ENCODE measurements at regions of chrX and their contacts with region 1.

Region 1: GRCh38 chrX:154799554-154800348 is 5.5 kb downstream of the MPP1 start:
- DNase-seq: peak; percentile 71 to 82
- H3K4me3 ChIP-seq: no peak overlapping the region
- H3K4me3 Mint-ChIP-seq: peak overlapping the region; percentile 56
- H3K27ac Mint-ChIP-seq: peak overlapping the region; percentile 86
- H3K4me1 ChIP-seq: peaks cover 39% of the 10 kb centered on the region
- H3K4me1 Mint-ChIP-seq: peaks cover 21% of the 10 kb centered on the region
- H3K27me3 ChIP-seq: no peaks in the 10 kb centered on the region
- H3K27me3 Mint-ChIP-seq: no peaks in the 10 kb centered on the region
- CTCF ChIP-seq: no peak

Region 2: GRCh38 chrX:154661170-154661569 is 138.6 kb before region 1 on chrX:
- CTCF ChIA-PET with region 1: no interaction called
- POLR2A ChIA-PET with region 1: no interaction called
- intact Hi-C with region 1: no loop called
- DNase-seq: no peak
- H3K4me3 ChIP-seq: no peak overlapping the region
- H3K4me3 Mint-ChIP-seq: no peak overlapping the region
- H3K27ac Mint-ChIP-seq: no peak overlapping the region
- H3K4me1 ChIP-seq: no peaks in the 10 kb centered on the region
- H3K4me1 Mint-ChIP-seq: no peaks in the 10 kb centered on the region
- H3K27me3 ChIP-seq: no peaks in the 10 kb centered on the region
- H3K27me3 Mint-ChIP-seq: peaks cover 10% of the 10 kb centered on the region
- CTCF ChIP-seq: no peak

Region 3: GRCh38 chrX:154762523-154763289 is 37.0 kb before region 1 on chrX and contains the start of gene DKC1:
- CTCF ChIA-PET with region 1: no interaction called
- POLR2A ChIA-PET with region 1: interaction called, 4 read pairs
- intact Hi-C with region 1: loop called (anchors 1 kb)
- DNase-seq: peak; percentile 95 to 96
- H3K4me3 ChIP-seq: peak within 1 kb of the TSS; percentile 78
- H3K4me3 Mint-ChIP-seq: peak within 1 kb of the TSS; percentile 84
- H3K27ac Mint-ChIP-seq: peak within 1 kb of the TSS; percentile 84
- H3K4me1 ChIP-seq: no peaks in the 10 kb centered on the region
- H3K4me1 Mint-ChIP-seq: no peaks in the 10 kb centered on the region
- H3K27me3 ChIP-seq: no peaks in the 10 kb centered on the region
- H3K27me3 Mint-ChIP-seq: no peaks in the 10 kb centered on the region
- CTCF ChIP-seq: no peak
- total RNA-seq, gene DKC1: 106 and 107 TPM in 2 replicates

Region 4: GRCh38 chrX:154784149-154784995 is 15.4 kb before region 1 on chrX:
- CTCF ChIA-PET with region 1: no interaction called
- POLR2A ChIA-PET with region 1: no interaction called
- intact Hi-C with region 1: loop called (anchors 2 kb)
- DNase-seq: no peak
- H3K4me3 ChIP-seq: no peak overlapping the region
- H3K4me3 Mint-ChIP-seq: peak overlapping the region; percentile 33
- H3K27ac Mint-ChIP-seq: peak overlapping the region; percentile 65
- H3K4me1 ChIP-seq: peaks cover 7% of the 10 kb centered on the region; the same call in 1 of the 2 replicates
- H3K4me1 Mint-ChIP-seq: peaks cover 18% of the 10 kb centered on the region
- H3K27me3 ChIP-seq: no peaks in the 10 kb centered on the region
- H3K27me3 Mint-ChIP-seq: no peaks in the 10 kb centered on the region
- CTCF ChIP-seq: no peak

Region 5: GRCh38 chrX:154840856-154841255 is 41.1 kb after region 1 on chrX:
- CTCF ChIA-PET with region 1: no interaction called
- POLR2A ChIA-PET with region 1: no interaction called
- intact Hi-C with region 1: loop called (anchors 5 kb)
- DNase-seq: peak in 1 of 2 experiments; percentile 19
- H3K4me3 ChIP-seq: no peak overlapping the region
- H3K4me3 Mint-ChIP-seq: no peak overlapping the region
- H3K27ac Mint-ChIP-seq: no peak overlapping the region
- H3K4me1 ChIP-seq: no peaks in the 10 kb centered on the region
- H3K4me1 Mint-ChIP-seq: no peaks in the 10 kb centered on the region
- H3K27me3 ChIP-seq: no peaks in the 10 kb centered on the region
- H3K27me3 Mint-ChIP-seq: peaks cover 4% of the 10 kb centered on the region
- CTCF ChIP-seq: peak; percentile 32 to 50

Region 6: GRCh38 chrX:154980330-154981096 is 180.8 kb after region 1 on chrX:
- CTCF ChIA-PET with region 1: no interaction called
- POLR2A ChIA-PET with region 1: no interaction called
- intact Hi-C with region 1: no loop called
- DNase-seq: peak; percentile 52 to 66
- H3K4me3 ChIP-seq: peak overlapping the region; percentile 20; the same call in 1 of the 2 replicates
- H3K4me3 Mint-ChIP-seq: no peak overlapping the region
- H3K27ac Mint-ChIP-seq: no peak overlapping the region
- H3K4me1 ChIP-seq: no peaks in the 10 kb centered on the region
- H3K4me1 Mint-ChIP-seq: no peaks in the 10 kb centered on the region
- H3K27me3 ChIP-seq: no peaks in the 10 kb centered on the region; the same call in 1 of the 2 replicates
- H3K27me3 Mint-ChIP-seq: no peaks in the 10 kb centered on the region
- CTCF ChIP-seq: peak; percentile 47 to 59

Measured in Caco-2 (cell line).